ENCODE measurements at regions of chr4 and their contacts with region 1.

Region 1: DNA sequence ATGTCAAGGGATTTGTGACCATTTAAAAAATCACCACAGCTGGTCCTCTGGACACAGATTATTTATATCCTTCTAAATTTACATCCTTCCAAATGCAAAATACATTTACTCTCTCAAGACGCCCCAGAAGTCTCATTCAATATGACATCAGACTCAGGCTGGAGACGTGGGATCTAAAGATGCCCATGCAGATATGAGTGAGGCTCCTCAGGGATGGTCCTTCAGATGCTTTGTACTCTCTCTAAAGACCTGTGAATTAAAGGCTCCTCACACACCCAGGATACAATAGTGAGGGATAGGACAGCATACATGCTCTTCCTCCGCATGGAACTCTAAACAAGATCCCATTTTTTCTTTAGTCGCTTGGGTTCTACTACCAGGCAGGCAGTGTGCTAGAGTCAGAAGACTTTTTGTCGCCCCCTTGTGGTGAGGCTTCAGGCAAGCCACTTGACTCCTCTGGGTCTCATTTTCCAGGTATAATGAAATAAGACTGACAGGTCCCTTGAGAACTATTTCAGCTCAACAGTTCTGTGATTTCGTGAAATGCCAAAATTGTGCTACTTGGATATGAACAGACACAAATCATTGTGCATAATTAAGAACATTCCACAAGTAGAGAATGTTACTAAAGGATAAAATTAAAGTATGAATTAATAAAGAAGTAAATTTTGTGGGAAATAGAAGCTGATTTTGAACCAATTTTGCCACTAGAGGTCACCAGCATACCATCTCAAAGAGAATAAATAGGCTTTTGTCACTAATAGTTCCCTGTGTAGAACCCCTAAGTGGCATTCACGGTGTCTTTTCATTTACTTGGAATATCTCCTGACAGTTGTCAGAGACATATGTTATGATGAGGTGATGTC is 13.7 kb upstream of the SCOC start:
- DNase-seq: peak; percentile 42 to 80 (median 71)
- ATAC-seq: peak; percentile 95
- H3K4me3 ChIP-seq: no peak overlapping the region
- H3K4me3 Mint-ChIP-seq: peak overlapping the region in 2 of 10 donors; percentile 20 to 43
- H3K27ac ChIP-seq: no peak overlapping the region
- H3K27ac Mint-ChIP-seq: peak overlapping the region in 1 of 9 donors; percentile 42
- H3K4me1 ChIP-seq: no peaks in the 10 kb centered on the region
- H3K4me1 Mint-ChIP-seq: peaks cover 0 to 5% (median 3%) of the 10 kb centered on the region in 7 donors
- H3K27me3 ChIP-seq: no peaks in the 10 kb centered on the region
- H3K27me3 Mint-ChIP-seq: peaks cover 0 to 18% (median 0%) of the 10 kb centered on the region in 5 donors

Region 2: GRCh38 chr4:139603576-139604387 is 756.0 kb before region 1 on chr4:
- CTCF ChIA-PET with region 1: no interaction called
- POLR2A ChIA-PET with region 1: no interaction called
- intact Hi-C with region 1: loop called in 1 of 2 experiments (anchors 1 kb)
- DNase-seq: peak in 7 of 9 donors; percentile 5 to 46 (median 33)
- ATAC-seq: peak; percentile 54
- H3K4me3 ChIP-seq: no peak overlapping the region
- H3K4me3 Mint-ChIP-seq: no peak overlapping the region
- H3K27ac ChIP-seq: no peak overlapping the region
- H3K27ac Mint-ChIP-seq: no peak overlapping the region
- H3K4me1 ChIP-seq: no peaks in the 10 kb centered on the region
- H3K4me1 Mint-ChIP-seq: peaks cover 13 to 23% (median 17%) of the 10 kb centered on the region in 7 donors
- H3K27me3 ChIP-seq: no peaks in the 10 kb centered on the region
- H3K27me3 Mint-ChIP-seq: peaks cover 10 to 21% (median 14%) of the 10 kb centered on the region in 5 donors

Region 3: GRCh38 chr4:140012688-140013486 is 346.9 kb before region 1 on chr4:
- CTCF ChIA-PET with region 1: interaction called, 4 read pairs
- POLR2A ChIA-PET with region 1: no interaction called
- intact Hi-C with region 1: loop called (anchors 1 kb)
- DNase-seq: peak; percentile 7 to 77 (median 66)
- ATAC-seq: peak; percentile 94
- H3K4me3 ChIP-seq: no peak overlapping the region
- H3K4me3 Mint-ChIP-seq: peak overlapping the region in 1 of 10 donors; percentile 1
- H3K27ac ChIP-seq: no peak overlapping the region
- H3K27ac Mint-ChIP-seq: peak overlapping the region in 1 of 9 donors; percentile 11
- H3K4me1 ChIP-seq: no peaks in the 10 kb centered on the region
- H3K4me1 Mint-ChIP-seq: peaks cover 5 to 9% (median 8%) of the 10 kb centered on the region in 7 donors
- H3K27me3 ChIP-seq: no peaks in the 10 kb centered on the region
- H3K27me3 Mint-ChIP-seq: peaks cover 0 to 39% (median 0%) of the 10 kb centered on the region in 5 donors

Region 4: DNA sequence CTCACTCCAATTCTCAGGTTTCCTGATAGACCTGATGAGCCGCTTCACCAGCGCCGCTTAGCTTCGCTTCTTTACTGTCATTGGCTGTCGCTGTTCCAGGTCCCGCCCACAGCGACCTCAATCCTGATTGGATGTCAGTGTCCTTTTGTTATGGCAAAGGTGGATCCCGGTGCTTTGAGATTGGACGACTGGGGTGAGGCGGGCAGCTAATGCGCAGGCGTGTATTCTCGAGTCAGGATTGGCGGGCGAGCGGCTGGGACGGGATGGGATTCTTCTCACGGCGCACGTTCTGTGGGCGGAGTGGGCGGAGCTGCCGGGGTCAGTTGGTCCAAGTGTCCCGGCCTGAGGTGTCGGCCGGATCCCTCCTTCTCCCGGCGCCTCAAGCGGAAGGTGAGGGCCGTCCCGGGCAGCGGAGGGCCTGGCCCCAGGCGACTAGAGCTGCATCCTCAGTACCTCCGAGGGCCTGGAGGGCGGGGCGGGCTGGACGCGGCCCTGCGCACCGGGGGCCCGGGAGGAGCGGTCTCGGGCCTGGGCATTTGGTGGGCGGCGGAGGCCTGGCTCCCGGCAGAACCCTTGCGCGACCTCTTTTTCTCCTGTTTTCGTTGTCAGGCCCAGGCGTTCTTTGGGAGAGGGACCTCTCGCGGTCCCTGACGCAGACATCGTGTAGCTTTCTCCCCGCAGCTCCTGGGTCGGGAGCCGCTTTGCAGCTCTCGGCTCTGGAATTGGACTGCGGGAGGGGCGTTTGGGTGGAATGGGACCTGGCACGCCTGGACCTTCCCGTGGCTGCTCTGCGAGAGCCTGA is 13.7 kb after region 1 on chr4 and contains the start of gene SCOC:
- CTCF ChIA-PET with region 1: interaction called, 35 read pairs
- POLR2A ChIA-PET with region 1: interaction called, 4 read pairs
- intact Hi-C with region 1: loop called (anchors 1 kb)
- DNase-seq: peak; percentile 80 to 98 (median 95)
- ATAC-seq: peak; percentile 98
- H3K4me3 ChIP-seq: peak within 1 kb of the TSS; percentile 79
- H3K4me3 Mint-ChIP-seq: peak within 1 kb of the TSS in 2 of 10 donors; percentile 87 to 90
- H3K27ac ChIP-seq: peak within 1 kb of the TSS; percentile 86
- H3K27ac Mint-ChIP-seq: peak within 1 kb of the TSS in 5 of 9 donors; percentile 47 to 90 (median 51)
- H3K4me1 ChIP-seq: peaks cover 6 to 7% of the 10 kb centered on the region in 2 donors
- H3K4me1 Mint-ChIP-seq: peaks cover 29 to 49% (median 43%) of the 10 kb centered on the region in 7 donors
- H3K27me3 ChIP-seq: no peaks in the 10 kb centered on the region
- H3K27me3 Mint-ChIP-seq: peaks cover 0 to 17% (median 0%) of the 10 kb centered on the region in 5 donors
- total RNA-seq, gene SCOC: 9.3 to 26.3 (median 22.6) TPM

Region 5: DNA sequence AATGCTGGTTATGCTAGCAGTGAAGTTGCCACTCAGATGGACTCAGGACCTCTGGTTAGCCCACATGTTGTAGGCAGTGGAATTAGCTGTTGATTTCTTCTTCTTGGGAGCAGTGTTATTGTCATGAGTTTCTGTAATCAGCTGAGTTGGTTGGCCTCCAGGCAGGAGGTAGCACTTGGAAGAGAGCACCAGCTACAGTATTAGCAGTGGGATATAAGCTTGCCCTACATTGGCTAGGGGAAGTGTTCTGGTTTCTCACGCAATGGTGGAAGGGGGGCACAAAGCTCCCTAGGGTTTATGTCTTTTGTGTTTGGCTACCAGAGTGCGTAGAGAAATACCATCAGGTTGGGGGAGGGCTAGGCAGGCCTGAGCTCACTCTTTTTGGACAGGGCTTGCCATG is 242.9 kb after region 1 on chr4:
- CTCF ChIA-PET with region 1: no interaction called
- POLR2A ChIA-PET with region 1: no interaction called
- intact Hi-C with region 1: no loop called
- DNase-seq: no peak
- ATAC-seq: no peak
- H3K4me3 ChIP-seq: no peak overlapping the region
- H3K4me3 Mint-ChIP-seq: no peak overlapping the region
- H3K27ac ChIP-seq: no peak overlapping the region
- H3K27ac Mint-ChIP-seq: no peak overlapping the region
- H3K4me1 ChIP-seq: no peaks in the 10 kb centered on the region
- H3K4me1 Mint-ChIP-seq: no peaks in the 10 kb centered on the region
- H3K27me3 ChIP-seq: no peaks in the 10 kb centered on the region
- H3K27me3 Mint-ChIP-seq: peaks cover 0 to 27% (median 8%) of the 10 kb centered on the region in 5 donors

Region 6: DNA sequence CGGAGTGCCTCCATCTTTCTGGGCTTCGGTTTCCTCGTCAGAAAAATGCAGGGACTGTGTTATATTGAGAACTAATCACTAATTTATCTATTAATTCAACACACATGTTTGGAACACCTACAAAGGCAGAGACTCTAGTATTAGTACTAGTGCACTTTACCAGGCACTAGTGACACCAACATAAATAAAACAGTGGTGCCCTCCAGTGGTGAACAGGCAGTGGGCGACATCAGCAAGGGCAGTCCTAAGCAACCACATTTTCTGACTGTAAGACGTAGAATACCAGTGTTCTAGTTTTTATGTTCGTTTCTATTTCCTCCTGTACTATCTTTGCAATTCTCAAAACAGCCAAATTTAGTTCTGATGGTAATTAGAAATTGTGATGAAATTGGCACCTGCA is 278.0 kb after region 1 on chr4:
- CTCF ChIA-PET with region 1: interaction called, 3 read pairs
- POLR2A ChIA-PET with region 1: no interaction called
- intact Hi-C with region 1: loop called in 1 of 2 experiments (anchors 1 kb)
- DNase-seq: peak in 5 of 9 donors; percentile 4 to 34 (median 27)
- ATAC-seq: peak; percentile 71
- H3K4me3 ChIP-seq: no peak overlapping the region
- H3K4me3 Mint-ChIP-seq: no peak overlapping the region
- H3K27ac ChIP-seq: no peak overlapping the region
- H3K27ac Mint-ChIP-seq: no peak overlapping the region
- H3K4me1 ChIP-seq: no peaks in the 10 kb centered on the region
- H3K4me1 Mint-ChIP-seq: peaks cover 0 to 2% (median 0%) of the 10 kb centered on the region in 7 donors
- H3K27me3 ChIP-seq: no peaks in the 10 kb centered on the region
- H3K27me3 Mint-ChIP-seq: peaks cover 6 to 24% (median 19%) of the 10 kb centered on the region in 5 donors

Region 7: GRCh38 chr4:141571368-141571767 is 1211.6 kb after region 1 on chr4:
- CTCF ChIA-PET with region 1: no interaction called
- POLR2A ChIA-PET with region 1: no interaction called
- intact Hi-C with region 1: no loop called
- DNase-seq: no peak
- ATAC-seq: no peak
- H3K4me3 ChIP-seq: no peak overlapping the region
- H3K4me3 Mint-ChIP-seq: no peak overlapping the region
- H3K27ac ChIP-seq: no peak overlapping the region
- H3K27ac Mint-ChIP-seq: peak overlapping the region in 1 of 9 donors; percentile 8
- H3K4me1 ChIP-seq: no peaks in the 10 kb centered on the region
- H3K4me1 Mint-ChIP-seq: no peaks in the 10 kb centered on the region
- H3K27me3 ChIP-seq: no peaks in the 10 kb centered on the region
- H3K27me3 Mint-ChIP-seq: peaks cover 0 to 5% (median 0%) of the 10 kb centered on the region in 5 donors

Measured in naive thymus-derived CD4-positive, alpha-beta T cell (primary cell).